ENCODE measurements at regions of chr22 and their contacts with region 1.

Region 1: DNA sequence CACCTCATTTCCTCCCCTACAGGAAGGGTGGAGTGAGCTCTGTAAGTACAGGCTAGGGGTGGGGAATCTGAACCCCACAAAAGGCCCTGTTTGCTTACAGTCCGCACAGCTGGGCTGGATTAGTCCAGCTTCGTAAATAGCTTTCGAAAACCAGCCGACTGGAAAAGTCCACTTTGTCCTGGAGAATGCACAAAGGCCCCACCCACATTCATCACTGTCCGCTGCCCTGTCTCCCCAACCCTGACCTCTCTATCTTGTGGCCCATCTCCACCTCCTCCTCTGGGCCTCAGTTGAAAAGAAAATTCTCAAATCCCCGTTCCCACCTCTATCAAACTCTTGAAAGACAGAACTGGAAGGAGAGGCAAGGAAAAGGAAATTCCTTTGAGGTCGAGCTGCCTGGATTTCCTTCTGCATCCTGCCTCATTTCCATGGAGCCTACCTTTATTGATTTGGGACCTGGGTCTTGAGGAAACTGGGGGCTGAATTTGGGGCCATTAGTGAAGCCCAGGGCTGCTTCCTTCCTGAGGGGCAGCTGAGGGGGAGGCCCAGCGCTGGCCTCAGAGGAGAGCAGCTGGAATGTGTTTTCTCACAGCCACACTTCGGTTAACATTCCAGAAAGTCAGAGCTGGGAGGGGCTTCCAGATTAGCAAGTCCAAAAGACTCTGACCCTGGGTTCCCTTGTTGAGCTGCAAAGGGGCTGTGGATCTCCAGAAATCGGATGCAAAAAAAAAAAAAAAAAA is 147.6 kb downstream of the FBXO7 start:
- DNase-seq: peak; percentile 44 to 65
- ATAC-seq: peak; percentile 49 to 55
- H3K4me3 ChIP-seq: peak overlapping the region in 2 of 4 donors; percentile 13 to 24
- H3K27ac ChIP-seq: peak overlapping the region; percentile 73 to 88 (median 82)
- H3K4me1 ChIP-seq: peaks cover 43 to 74% of the 10 kb centered on the region in 2 donors
- H3K27me3 ChIP-seq: no peaks in the 10 kb centered on the region
- CTCF ChIP-seq: no peak
- POLR2A ChIP-seq: peak in 1 of 2 donors; percentile 12

Region 2: DNA sequence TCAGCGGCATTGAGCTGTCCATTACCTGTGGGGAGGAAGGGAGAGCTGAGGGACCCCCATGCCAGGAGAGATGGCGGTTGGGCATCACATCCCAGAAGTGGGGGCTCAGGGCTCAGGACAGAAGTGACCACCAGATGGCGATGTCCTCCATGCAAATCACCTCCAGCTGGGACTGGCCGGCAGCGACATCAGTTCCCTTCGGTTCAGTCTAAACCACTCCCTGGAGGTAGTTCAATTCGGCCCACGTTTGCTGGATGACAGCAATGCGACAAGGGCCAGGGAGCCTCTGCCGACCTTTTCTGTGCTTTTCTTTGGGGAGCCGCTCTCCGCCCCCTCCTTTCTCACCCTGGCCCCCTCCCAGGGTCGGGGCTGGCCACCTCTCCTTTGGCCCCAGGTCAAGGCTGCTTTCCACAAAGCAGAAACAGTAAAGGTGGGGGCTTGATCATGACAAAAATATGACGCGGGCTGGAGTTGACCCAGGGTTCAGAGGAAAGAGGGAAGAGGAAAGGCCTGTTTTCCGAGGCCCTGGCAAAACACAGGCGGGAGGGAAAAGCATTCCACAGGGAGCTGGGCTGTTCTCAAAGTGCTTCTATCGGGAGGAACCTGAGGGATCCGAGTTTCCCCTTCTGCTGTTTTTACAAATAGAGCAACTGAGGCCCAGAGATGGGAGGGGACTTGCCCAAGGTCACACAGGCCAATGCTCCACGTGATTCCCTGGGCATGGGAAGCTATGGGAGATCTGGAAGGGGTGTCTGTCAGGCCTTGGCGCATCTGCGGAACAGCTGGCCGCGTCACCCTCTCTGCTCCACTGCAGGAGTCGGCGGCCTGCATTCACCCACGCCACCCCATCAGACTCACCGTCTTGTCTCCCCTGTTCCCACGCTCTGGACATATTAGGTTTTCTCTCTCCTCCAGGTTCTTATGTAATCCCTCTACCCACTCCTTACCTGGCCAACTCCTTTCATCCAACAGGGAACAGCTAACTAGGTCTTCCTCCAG is 92.9 kb before region 1 on chr22:
- in situ Hi-C with region 1: no loop called
- intact Hi-C with region 1: loop called (anchors 2 kb)
- DNase-seq: peak; percentile 68 to 77
- ATAC-seq: peak; percentile 60 to 62
- H3K4me3 ChIP-seq: peak overlapping the region in 1 of 4 donors; percentile 35
- H3K27ac ChIP-seq: peak overlapping the region; percentile 71 to 87 (median 78)
- H3K4me1 ChIP-seq: peaks cover 17 to 33% of the 10 kb centered on the region in 2 donors
- H3K27me3 ChIP-seq: no peaks in the 10 kb centered on the region
- CTCF ChIP-seq: peak; percentile 59 to 89 (median 85)
- POLR2A ChIP-seq: no peak

Region 3: GRCh38 chr22:32579509-32580234 is 42.5 kb before region 1 on chr22:
- in situ Hi-C with region 1: no loop called
- intact Hi-C with region 1: loop called (anchors 5 kb)
- DNase-seq: no peak
- ATAC-seq: peak; percentile 39 to 41
- H3K4me3 ChIP-seq: no peak overlapping the region
- H3K27ac ChIP-seq: peak overlapping the region; percentile 44 to 69 (median 62)
- H3K4me1 ChIP-seq: peaks cover 0 to 7% of the 10 kb centered on the region in 2 donors
- H3K27me3 ChIP-seq: no peaks in the 10 kb centered on the region
- CTCF ChIP-seq: no peak
- POLR2A ChIP-seq: no peak

Region 4: GRCh38 chr22:32695451-32695891 is 73.3 kb after region 1 on chr22:
- in situ Hi-C with region 1: no loop called
- intact Hi-C with region 1: loop called (anchors 5 kb)
- DNase-seq: no peak
- ATAC-seq: no peak
- H3K4me3 ChIP-seq: no peak overlapping the region
- H3K27ac ChIP-seq: no peak overlapping the region
- H3K4me1 ChIP-seq: peaks cover 11 to 12% of the 10 kb centered on the region in 2 donors
- H3K27me3 ChIP-seq: no peaks in the 10 kb centered on the region
- CTCF ChIP-seq: no peak
- POLR2A ChIP-seq: no peak

Measured in gastrocnemius medialis (tissue), 4 donors.